PC-9 (cell line): ENCODE measurements at regions of chr1 and their contacts with region 1.

Region 1: DNA sequence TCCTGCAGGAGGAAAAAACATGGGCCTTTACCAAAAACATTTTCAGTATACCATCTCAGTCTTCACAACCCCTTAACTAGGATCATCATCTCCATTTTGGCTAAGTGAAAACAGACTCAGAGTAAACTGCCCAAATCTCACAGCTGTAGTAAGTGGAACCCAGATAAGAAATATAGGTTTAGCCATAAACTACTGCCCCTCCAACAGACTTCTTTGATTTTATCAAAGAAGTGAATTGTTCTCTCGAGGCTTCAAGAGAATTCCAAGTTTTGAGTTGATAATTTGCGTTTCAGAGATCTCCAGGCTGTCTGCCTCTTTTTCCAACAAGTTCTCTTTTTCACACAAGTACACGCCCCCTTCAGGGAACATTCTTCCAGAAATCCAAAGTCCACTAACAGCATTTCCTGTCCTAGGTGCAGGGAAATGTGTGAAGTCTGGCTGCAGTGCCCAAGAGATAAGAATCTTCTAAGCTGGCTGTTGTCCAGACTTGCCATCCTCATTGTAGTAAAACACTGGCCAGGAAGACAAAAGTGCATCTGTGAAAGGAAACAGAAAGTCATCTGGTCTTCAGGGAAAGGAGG is 30.8 kb downstream of the RNF19B start:
- DNase-seq: peak; percentile 42 to 52
- H3K4me3 ChIP-seq: no peak overlapping the region
- H3K27ac ChIP-seq: peak overlapping the region; percentile 31
- H3K4me1 ChIP-seq: peaks cover 18% of the 10 kb centered on the region
- H3K27me3 ChIP-seq: no peaks in the 10 kb centered on the region
- CTCF ChIP-seq: peak; percentile 44; the same call in 1 of the 2 replicates

Region 2: DNA sequence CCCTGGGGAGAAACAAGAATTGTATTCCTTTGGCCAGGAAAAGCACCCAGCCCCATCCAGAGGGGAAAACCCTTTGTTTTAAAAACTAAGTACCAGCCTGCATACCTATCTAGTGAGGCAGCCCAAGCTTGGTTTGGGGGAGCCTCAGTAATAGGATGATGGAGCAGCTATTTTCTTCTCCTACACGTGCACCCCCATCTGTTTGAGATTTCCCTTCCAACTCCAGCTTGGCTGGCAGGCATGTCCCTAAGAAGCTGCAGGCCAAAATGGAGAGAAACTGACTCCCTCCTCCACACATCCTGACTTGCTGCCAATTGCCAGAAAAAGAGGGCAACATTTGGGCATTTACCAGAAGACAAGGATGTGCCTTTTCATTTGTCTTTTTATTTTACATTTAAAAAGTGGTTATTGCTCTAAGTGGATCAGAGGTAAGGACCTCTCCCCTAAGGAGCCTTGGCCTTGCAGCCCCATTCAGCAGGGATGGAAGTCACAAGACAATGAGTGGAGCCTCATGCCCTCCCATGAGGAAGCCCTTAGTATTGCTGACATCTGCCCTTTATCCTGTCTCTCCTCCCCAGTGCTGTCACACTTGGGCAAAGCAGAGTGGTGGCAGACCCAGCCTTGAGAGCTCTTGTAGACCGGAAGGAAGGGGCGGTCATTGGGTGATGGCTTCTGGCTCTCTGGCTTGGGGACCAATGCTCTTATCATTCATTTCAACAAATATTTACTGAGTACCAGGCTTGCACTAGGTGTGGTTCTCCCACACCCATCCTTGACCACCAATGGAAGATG is 71.7 kb before region 1 on chr1:
- CTCF ChIA-PET with region 1: no interaction called
- POLR2A ChIA-PET with region 1: no interaction called
- intact Hi-C with region 1: no loop called
- DNase-seq: no peak
- H3K4me3 ChIP-seq: no peak overlapping the region
- H3K27ac ChIP-seq: no peak overlapping the region
- H3K4me1 ChIP-seq: no peaks in the 10 kb centered on the region
- H3K27me3 ChIP-seq: no peaks in the 10 kb centered on the region
- CTCF ChIP-seq: no peak

Region 3: DNA sequence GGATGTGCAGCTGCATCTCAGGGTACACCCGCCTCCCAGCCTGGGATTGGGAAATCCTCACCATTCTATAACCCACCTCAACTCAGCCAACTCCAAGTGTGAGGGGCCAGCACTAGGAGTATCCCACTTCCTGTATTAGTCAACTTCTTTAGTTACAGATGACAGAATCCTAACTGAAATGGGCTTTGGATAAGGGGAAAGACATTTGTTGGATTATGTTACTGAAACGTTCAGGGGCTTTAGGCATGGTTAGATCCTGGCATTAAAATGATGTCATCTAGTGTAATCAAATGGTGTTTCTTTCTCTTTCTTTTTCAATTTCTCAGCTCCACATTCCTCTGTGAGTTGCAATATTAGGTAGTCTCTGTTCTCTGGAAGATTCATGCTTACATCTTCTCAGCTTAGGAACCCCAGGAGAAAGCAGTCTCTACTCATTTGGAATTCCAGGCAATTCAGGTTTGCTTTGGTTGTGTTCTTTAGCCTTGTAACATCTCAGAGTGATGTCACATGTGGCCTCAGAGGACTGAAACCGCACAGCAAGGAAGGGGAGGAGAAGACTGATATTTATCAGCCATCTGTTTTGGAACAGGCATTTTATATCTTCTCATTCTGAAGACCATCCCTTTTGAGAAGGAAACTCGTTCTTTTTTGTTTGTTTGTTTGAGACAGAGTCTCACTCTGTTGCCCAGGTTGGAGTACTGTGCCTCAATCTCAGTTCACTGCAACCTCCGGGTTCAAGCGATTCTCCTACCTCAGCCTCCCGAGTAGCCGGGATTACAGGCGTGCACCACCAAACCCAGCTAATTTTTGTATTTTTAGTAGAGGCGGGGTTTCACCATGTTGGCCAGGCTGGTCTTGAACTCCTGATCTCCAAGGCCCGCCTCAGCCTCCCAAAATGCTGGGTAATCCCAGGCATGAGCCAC is 13.8 kb before region 1 on chr1:
- CTCF ChIA-PET with region 1: no interaction called
- POLR2A ChIA-PET with region 1: no interaction called
- intact Hi-C with region 1: no loop called
- DNase-seq: no peak
- H3K4me3 ChIP-seq: no peak overlapping the region
- H3K27ac ChIP-seq: no peak overlapping the region
- H3K4me1 ChIP-seq: peaks cover 8% of the 10 kb centered on the region; the same call in 1 of the 2 replicates
- H3K27me3 ChIP-seq: no peaks in the 10 kb centered on the region
- CTCF ChIP-seq: no peak

Region 4: GRCh38 chr1:32963746-32964460 is 30.1 kb after region 1 on chr1:
- CTCF ChIA-PET with region 1: no interaction called
- POLR2A ChIA-PET with region 1: interaction called, 8 read pairs
- intact Hi-C with region 1: loop called (anchors 2 kb)
- DNase-seq: peak; percentile 58 to 74
- H3K4me3 ChIP-seq: peak overlapping the region; percentile 97
- H3K27ac ChIP-seq: 0 out of 2 replicates have a peak overlapping the region, but pooled peaks have one; percentile 18
- H3K4me1 ChIP-seq: peaks cover 36% of the 10 kb centered on the region
- H3K27me3 ChIP-seq: no peaks in the 10 kb centered on the region
- CTCF ChIP-seq: no peak

Region 5: GRCh38 chr1:33080885-33081553 is 147.2 kb after region 1 on chr1 and contains the start of gene AZIN2:
- CTCF ChIA-PET with region 1: interaction called, 4 read pairs
- POLR2A ChIA-PET with region 1: interaction called, 5 read pairs
- intact Hi-C with region 1: loop called (anchors 5 kb)
- DNase-seq: peak; percentile 83 to 93
- H3K4me3 ChIP-seq: peak within 1 kb of the TSS; percentile 66
- H3K27ac ChIP-seq: no peak within 1 kb of the TSS
- H3K4me1 ChIP-seq: peaks cover 9% of the 10 kb centered on the region
- H3K27me3 ChIP-seq: no peaks in the 10 kb centered on the region
- CTCF ChIP-seq: no peak
- total RNA-seq, gene AZIN2: 7.3 and 11.6 TPM in 2 replicates